GM12878 (cell line): ENCODE measurements at regions of chrX and their contacts with region 1.

Region 1: DNA sequence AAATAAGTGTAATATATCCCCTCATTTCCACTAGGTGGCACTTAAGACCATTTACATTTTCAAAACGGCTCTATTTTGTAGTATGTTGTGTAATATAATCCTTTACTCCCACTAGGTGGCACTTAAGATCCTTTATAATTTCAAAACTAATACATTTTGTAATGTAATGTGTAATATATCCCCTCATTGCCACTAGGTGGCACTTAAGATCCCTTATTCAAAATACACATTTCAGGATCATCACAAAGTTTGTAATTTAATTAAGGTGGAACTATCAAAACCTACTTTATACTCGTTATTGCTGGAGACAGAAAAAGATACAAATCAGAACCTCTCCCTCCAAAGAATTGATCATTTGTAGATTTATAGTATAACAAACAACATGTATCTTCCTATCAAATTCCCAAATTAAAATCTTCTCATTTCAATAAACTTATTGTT is 132.5 kb downstream of the ARHGAP6 start:
- DNase-seq: peak; percentile 61
- ATAC-seq: peak; percentile 93
- H3K4me3 ChIP-seq: no peak overlapping the region
- H3K27ac ChIP-seq: no peak overlapping the region
- H3K4me1 ChIP-seq: no peaks in the 10 kb centered on the region
- H3K27me3 ChIP-seq: no peaks in the 10 kb centered on the region
- CTCF ChIP-seq: peak; percentile 41 to 98 (median 83); a peak in 4 of 6 replicates
- EP300 ChIP-seq: no peak
- POLR2A ChIP-seq: no peak
- RAD21 ChIP-seq: peak; percentile 72

Region 2: DNA sequence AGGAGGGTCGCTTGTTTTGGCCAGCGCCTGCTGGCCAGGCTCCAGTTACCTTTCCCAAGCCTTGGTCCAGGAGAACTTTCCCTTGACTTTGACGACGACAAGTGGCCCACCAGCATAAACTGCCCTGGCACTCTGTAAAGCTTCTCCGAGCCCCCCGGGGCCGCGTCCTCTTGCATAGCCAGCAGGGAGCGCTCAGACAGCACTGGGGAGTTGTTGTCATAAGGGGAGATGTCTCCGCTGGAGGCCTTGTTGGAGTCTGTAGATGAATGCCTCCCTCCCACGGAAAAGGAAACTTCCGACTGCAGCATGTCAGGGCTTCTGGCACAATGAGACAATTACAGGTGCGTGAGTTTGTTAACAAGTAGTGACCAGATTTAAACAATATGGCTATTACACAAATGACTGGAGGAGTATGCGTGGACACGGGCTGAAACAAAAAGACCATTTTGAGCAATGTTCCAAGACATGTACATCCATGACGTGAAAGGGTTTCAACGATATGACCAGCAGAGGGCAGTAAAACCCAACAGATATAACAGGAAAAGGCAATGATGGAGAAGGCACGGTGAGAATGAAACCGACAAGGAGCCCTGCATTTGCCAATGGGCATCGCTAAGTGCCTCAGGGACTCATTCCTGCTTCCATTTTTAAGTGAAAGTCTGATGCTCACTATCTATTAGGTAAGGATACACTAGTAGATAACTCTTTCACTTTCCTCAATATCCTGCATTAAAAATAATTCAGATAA is 389.1 kb before region 1 on chrX:
- CTCF ChIA-PET with region 1: interaction called, 13 read pairs
- POLR2A ChIA-PET with region 1: no interaction called
- RAD21 ChIA-PET with region 1: interaction called, 5 read pairs
- SMC1A ChIA-PET with region 1: interaction called, 13 read pairs
- in situ Hi-C with region 1: loop called (anchors 5 kb)
- intact Hi-C with region 1: loop called (anchors 1 kb)
- DNase-seq: peak; percentile 42
- ATAC-seq: peak; percentile 99
- H3K4me3 ChIP-seq: no peak overlapping the region
- H3K27ac ChIP-seq: no peak overlapping the region
- H3K4me1 ChIP-seq: no peaks in the 10 kb centered on the region
- H3K27me3 ChIP-seq: no peaks in the 10 kb centered on the region
- CTCF ChIP-seq: peak; percentile 54 to 70 (median 56)
- EP300 ChIP-seq: no peak
- POLR2A ChIP-seq: no peak
- RAD21 ChIP-seq: peak; percentile 85

Region 3: DNA sequence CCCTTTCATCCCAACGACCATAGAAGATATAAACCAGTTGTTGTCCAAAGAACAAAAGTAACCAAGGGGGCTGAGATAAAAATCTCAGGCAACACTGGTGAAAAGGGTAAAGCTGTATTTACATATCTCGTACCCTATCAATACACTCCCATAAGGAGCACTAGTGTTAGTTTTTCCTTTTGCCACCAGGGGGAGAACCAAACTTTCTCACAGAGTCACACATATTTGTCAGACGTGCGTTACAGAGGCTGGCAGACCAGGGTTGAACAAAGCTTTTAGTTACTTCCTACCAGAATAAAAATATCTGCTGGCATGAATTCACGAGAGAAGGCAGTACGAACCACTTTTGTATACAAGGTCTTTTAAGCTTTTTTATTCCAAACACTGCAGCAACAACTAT is 151.8 kb before region 1 on chrX:
- CTCF ChIA-PET with region 1: interaction called, 36 read pairs
- POLR2A ChIA-PET with region 1: no interaction called
- RAD21 ChIA-PET with region 1: interaction called, 12 read pairs
- SMC1A ChIA-PET with region 1: interaction called, 29 read pairs
- in situ Hi-C with region 1: no loop called
- intact Hi-C with region 1: loop called (anchors 1 kb)
- DNase-seq: peak; percentile 30
- ATAC-seq: peak; percentile 97
- H3K4me3 ChIP-seq: no peak overlapping the region
- H3K27ac ChIP-seq: no peak overlapping the region
- H3K4me1 ChIP-seq: no peaks in the 10 kb centered on the region
- H3K27me3 ChIP-seq: no peaks in the 10 kb centered on the region
- CTCF ChIP-seq: peak; percentile 64 to 71 (median 70)
- EP300 ChIP-seq: no peak
- POLR2A ChIP-seq: no peak
- RAD21 ChIP-seq: peak; percentile 60

Region 4: DNA sequence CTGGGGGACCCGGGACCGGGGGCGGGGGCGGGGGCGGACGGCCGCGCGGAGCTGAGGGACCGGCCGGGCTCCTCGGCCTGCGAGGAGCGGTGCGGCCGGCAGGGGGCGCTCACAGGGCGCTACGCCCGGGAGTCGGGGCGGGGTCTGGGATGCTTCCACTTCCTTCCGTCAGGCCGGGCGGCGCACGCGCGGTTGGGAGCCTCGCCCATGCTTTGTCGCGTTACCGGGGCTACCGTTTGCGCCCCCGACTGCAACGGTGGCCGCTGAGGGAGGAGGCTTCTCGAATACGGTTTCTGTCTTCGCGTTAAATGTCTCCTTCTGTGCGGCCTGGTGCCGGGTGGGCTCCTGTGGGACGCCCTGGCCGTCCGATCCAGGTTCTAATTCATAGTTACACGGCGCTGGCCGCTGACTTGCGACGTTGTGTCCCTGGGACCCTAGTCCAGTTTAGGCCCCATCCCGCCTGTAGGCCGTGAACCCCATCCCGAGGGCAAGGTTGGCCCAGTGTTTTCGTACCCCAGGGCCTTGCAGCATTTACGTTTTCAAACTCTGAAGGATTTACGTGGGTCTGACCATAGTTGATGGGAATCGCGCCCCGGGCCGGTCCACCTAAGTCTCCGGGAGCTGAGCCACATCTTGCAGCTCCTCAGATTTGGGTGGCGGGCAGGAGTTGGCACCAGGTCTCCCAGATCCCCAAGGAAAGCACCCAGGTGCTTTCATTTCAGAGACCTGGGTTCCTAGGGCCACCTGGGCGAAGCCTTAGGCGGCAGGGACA is 225.4 kb after region 1 on chrX:
- CTCF ChIA-PET with region 1: interaction called, 4 read pairs
- POLR2A ChIA-PET with region 1: no interaction called
- RAD21 ChIA-PET with region 1: interaction called, 7 read pairs
- SMC1A ChIA-PET with region 1: interaction called, 10 read pairs
- in situ Hi-C with region 1: no loop called
- intact Hi-C with region 1: no loop called
- DNase-seq: no peak
- ATAC-seq: peak; percentile 44
- H3K4me3 ChIP-seq: peak overlapping the region; percentile 60
- H3K27ac ChIP-seq: peak overlapping the region; percentile 90
- H3K4me1 ChIP-seq: peaks cover 7% of the 10 kb centered on the region; the same call in 1 of the 2 replicates
- H3K27me3 ChIP-seq: no peaks in the 10 kb centered on the region
- CTCF ChIP-seq: peak; percentile 34 to 68 (median 59); a peak in 4 of 6 replicates
- EP300 ChIP-seq: peak in 1 of 2 experiments; percentile 10; a peak in 1 of 4 replicates
- POLR2A ChIP-seq: no peak; the same call in 1 of the 2 replicates
- RAD21 ChIP-seq: peak; percentile 43

Region 5: DNA sequence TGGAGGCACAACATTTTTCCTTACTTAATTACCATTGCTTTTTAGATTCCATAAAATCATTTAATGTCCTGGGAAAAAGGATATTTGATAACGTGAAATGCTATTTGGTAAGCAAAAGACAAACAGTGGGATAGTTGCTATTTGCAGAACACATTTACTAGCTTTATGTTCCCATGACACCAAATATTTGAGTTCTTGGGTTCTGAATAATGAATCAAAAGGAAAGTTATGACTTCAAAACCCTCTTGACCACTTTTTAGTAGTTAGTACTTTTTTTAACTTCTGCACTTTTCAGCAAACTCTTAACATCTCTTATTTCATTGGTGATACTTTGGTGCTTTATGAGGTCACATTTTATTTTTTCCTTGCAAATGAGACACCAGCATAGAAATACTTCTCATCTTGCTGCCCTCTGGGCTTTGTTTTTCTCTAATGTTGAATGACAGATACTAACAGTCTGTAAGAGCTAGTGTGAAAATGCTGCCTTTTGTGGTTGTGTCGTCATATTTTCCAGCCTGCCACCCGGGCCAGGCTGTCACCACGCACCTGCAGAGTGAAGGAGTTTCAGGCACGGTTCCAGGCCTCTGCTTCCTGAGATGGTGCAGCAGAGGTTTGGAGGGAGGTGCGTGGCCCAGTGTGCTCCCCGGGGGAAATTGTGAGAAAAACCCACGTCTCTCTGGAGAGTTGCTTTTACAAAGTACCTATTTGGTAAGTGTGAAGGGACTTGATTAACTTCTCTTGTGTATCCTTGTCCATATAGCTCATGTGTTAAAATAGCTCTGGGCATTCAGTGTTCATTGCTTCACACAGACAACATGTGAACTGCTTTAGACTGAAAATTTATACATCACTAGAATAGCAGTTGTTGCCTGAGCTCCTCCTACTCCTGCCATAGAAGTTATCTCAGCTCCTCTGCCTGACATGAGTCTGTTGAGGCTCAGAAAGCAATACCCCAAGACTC is 259.5 kb after region 1 on chrX:
- CTCF ChIA-PET with region 1: interaction called, 12 read pairs
- POLR2A ChIA-PET with region 1: no interaction called
- RAD21 ChIA-PET with region 1: interaction called, 6 read pairs
- SMC1A ChIA-PET with region 1: no interaction called
- in situ Hi-C with region 1: no loop called
- intact Hi-C with region 1: no loop called
- DNase-seq: peak; percentile 86
- ATAC-seq: peak; percentile 87
- H3K4me3 ChIP-seq: peak overlapping the region; percentile 37; the same call in 1 of the 2 replicates
- H3K27ac ChIP-seq: peak overlapping the region; percentile 61
- H3K4me1 ChIP-seq: peaks cover 31% of the 10 kb centered on the region
- H3K27me3 ChIP-seq: no peaks in the 10 kb centered on the region
- CTCF ChIP-seq: no peak
- EP300 ChIP-seq: peak; percentile 86 to 96
- POLR2A ChIP-seq: 0 out of 2 replicates have a peak, but pooled peaks have one; percentile 27
- RAD21 ChIP-seq: 0 out of 2 replicates have a peak, but pooled peaks have one; percentile 4

Region 6: GRCh38 chrX:12115377-12115776 is 582.1 kb after region 1 on chrX:
- CTCF ChIA-PET with region 1: no interaction called
- POLR2A ChIA-PET with region 1: no interaction called
- RAD21 ChIA-PET with region 1: no interaction called
- SMC1A ChIA-PET with region 1: no interaction called
- in situ Hi-C with region 1: no loop called
- intact Hi-C with region 1: loop called (anchors 5 kb)
- DNase-seq: no peak
- ATAC-seq: peak; percentile 67
- H3K4me3 ChIP-seq: no peak overlapping the region
- H3K27ac ChIP-seq: no peak overlapping the region
- H3K4me1 ChIP-seq: no peaks in the 10 kb centered on the region
- H3K27me3 ChIP-seq: no peaks in the 10 kb centered on the region
- CTCF ChIP-seq: peak; percentile 25 to 44 (median 34); a peak in 3 of 6 replicates
- EP300 ChIP-seq: no peak
- POLR2A ChIP-seq: no peak
- RAD21 ChIP-seq: no peak

Region 7: GRCh38 chrX:12701628-12702027 is 1168.4 kb after region 1 on chrX:
- CTCF ChIA-PET with region 1: interaction called, 15 read pairs
- POLR2A ChIA-PET with region 1: no interaction called
- RAD21 ChIA-PET with region 1: interaction called, 8 read pairs
- SMC1A ChIA-PET with region 1: interaction called, 3 read pairs
- in situ Hi-C with region 1: no loop called
- intact Hi-C with region 1: loop called (anchors 2 kb)
- DNase-seq: peak; percentile 12
- ATAC-seq: peak; percentile 98
- H3K4me3 ChIP-seq: no peak overlapping the region
- H3K27ac ChIP-seq: no peak overlapping the region
- H3K4me1 ChIP-seq: no peaks in the 10 kb centered on the region
- H3K27me3 ChIP-seq: no peaks in the 10 kb centered on the region
- CTCF ChIP-seq: peak; percentile 70 to 84 (median 71)
- EP300 ChIP-seq: no peak
- POLR2A ChIP-seq: no peak
- RAD21 ChIP-seq: peak; percentile 86